Activated T-helper 1 cell treated with anti-CD3 and anti-CD28 coated beads, Interleukin-12 subunit alpha, Interleukin-12 subunit beta, Interleukin-2, Interleukin-4 antibody, amounts not matched to agents 30 ng/mL and 10 ng/mL and 1 ng/mL, durations not matched to agents 14 hours and 24 hours and 36 hours (primary cell): ENCODE measurements at regions of chr1 and their contacts with region 1.

Region 1: GRCh38 chr1:40404670-40405462 is 31.3 kb downstream of the SMAP2 start:
- DNase-seq: no peak
- H3K4me3 Mint-ChIP-seq: peak overlapping the region; percentile 70
- H3K27ac Mint-ChIP-seq: peak overlapping the region; percentile 94
- H3K4me1 Mint-ChIP-seq: peaks cover 75% of the 10 kb centered on the region
- H3K27me3 Mint-ChIP-seq: no peaks in the 10 kb centered on the region

Region 2: DNA sequence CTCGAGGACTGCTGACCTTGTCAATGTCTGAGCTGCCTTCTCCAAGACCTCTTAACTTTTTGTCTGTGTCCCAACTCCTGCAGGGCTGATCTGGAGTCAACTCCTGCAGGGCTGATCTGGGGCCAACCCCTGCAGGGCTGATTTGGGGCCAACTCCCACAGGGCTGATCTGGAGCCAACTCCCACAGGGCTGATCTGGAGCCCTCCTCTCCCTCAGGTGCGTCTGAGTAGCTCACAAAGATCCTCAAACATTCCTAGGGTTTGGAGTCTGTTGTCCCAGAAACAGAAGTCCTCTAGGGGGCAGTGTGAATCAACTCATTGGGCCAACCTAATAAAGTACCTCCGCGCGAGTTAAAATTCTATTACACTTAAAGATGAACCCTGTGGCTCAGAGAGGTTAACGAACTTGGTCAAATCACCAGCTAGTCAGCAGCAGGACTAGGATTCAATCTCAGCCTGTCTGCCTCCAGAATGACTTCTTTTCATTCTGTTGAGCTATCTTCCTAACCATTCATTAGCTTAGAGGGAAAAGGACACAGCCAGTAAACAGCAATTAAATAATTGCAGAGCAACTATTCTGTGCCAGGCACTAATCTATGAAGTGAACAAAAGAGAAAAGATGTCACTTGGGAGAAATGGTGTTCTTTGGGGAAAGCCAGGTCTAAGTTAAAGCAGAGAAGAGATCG is 260.8 kb before region 1 on chr1:
- intact Hi-C with region 1: loop called (anchors 1 kb)
- DNase-seq: peak; percentile 44
- H3K4me3 Mint-ChIP-seq: no peak overlapping the region
- H3K27ac Mint-ChIP-seq: no peak overlapping the region
- H3K4me1 Mint-ChIP-seq: peaks cover 32% of the 10 kb centered on the region
- H3K27me3 Mint-ChIP-seq: peaks cover 29% of the 10 kb centered on the region

Region 3: GRCh38 chr1:40241362-40241761 is 163.5 kb before region 1 on chr1:
- intact Hi-C with region 1: loop called (anchors 5 kb)
- DNase-seq: no peak
- H3K4me3 Mint-ChIP-seq: peak overlapping the region; percentile 23
- H3K27ac Mint-ChIP-seq: peak overlapping the region; percentile 94
- H3K4me1 Mint-ChIP-seq: peaks cover 77% of the 10 kb centered on the region
- H3K27me3 Mint-ChIP-seq: no peaks in the 10 kb centered on the region

Region 4: DNA sequence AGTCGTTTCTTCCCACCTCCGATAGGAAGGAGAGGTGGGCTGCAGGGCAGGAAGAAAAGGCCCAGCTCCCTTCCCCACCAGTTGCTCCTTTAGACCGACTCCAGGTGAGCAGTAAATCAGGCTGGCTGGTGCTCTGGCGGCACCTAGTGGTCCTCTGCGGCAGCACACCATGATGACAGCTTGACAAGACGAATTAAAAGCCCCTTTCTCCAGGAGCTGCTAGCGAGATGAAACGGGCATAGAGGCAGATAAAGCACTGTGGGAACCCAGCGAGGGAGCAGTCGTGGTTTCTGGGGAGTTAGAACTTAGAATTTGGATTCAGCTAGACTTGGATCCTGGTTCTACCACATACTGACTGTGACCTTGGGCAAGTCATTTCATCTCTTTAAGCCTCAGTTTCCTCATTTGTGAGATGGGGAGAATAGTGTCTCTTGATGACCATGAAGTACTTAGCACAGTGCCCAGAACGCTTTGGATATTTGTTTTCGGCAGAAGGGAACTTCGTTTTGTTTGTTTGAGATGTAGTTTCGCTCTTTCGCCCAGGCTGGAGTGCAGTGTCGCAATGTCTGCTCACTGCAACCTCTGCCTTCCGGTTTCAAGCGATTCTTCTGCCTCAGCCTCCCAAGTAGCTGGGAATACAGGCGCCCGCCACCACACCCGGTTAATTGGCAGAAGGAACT is 66.0 kb before region 1 on chr1:
- intact Hi-C with region 1: loop called (anchors 1 kb)
- DNase-seq: peak; percentile 84
- H3K4me3 Mint-ChIP-seq: peak overlapping the region; percentile 38
- H3K27ac Mint-ChIP-seq: peak overlapping the region; percentile 75
- H3K4me1 Mint-ChIP-seq: peaks cover 53% of the 10 kb centered on the region
- H3K27me3 Mint-ChIP-seq: no peaks in the 10 kb centered on the region

Region 5: DNA sequence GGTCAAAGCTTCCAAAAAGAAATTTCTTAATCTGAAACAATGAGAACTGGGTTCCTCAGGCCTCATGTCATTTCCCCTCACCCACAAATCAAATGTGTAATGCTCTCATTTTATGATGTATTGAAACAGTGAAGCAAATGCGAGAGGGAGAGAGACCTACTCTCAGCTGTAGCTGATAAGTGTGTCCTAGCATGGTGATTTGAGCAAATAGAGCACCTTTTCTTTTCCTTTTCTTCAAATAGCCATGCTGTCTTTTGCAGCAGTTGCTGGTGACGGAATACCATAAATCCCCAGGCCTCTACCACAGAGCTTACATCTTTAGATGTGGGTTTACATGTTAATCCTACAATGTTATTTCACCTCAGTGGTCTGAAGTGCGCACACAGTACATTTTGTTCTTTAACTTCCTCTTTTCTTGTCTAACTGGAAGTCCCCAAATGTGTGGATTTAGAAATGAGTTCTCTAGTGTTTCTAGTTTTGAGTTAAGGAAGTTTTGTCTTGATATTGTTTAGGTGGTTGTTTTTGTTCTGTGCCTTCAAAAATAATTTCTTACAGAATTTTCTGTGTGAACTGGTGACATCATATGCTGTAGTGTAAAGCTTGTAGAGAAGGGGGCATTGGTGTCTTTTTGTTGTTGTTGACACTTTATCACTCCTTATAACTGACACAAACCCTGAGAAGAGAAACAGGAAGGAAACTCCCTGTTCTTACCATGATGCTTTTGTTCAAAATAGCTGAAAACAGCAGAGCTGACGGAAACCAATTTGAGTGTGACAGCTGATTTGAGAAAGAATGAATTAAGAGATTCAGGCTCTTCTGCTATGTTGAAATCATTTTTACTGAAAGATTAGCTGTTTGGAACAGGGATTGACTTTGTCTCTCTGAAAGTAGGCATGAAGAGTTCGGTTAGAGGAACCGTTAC is 19.2 kb before region 1 on chr1:
- intact Hi-C with region 1: loop called (anchors 1 kb)
- DNase-seq: peak; percentile 73
- H3K4me3 Mint-ChIP-seq: peak overlapping the region; percentile 82
- H3K27ac Mint-ChIP-seq: peak overlapping the region; percentile 99
- H3K4me1 Mint-ChIP-seq: peaks cover 89% of the 10 kb centered on the region
- H3K27me3 Mint-ChIP-seq: no peaks in the 10 kb centered on the region

Region 6: GRCh38 chr1:40818264-40818961 is 413.5 kb after region 1 on chr1:
- intact Hi-C with region 1: no loop called
- DNase-seq: peak; percentile 89
- H3K4me3 Mint-ChIP-seq: peak overlapping the region; percentile 66
- H3K27ac Mint-ChIP-seq: peak overlapping the region; percentile 52
- H3K4me1 Mint-ChIP-seq: peaks cover 4% of the 10 kb centered on the region
- H3K27me3 Mint-ChIP-seq: peaks cover 9% of the 10 kb centered on the region